Esophagus muscularis mucosa (tissue), 4 donors: ENCODE measurements at regions of chr7 and their contacts with region 1.

Region 1: GRCh38 chr7:116180302-116180701 is 30.0 kb upstream of the TES start:
- DNase-seq: no peak
- H3K4me3 ChIP-seq: no peak overlapping the region
- H3K27ac ChIP-seq: no peak overlapping the region
- H3K4me1 ChIP-seq: peaks cover 0 to 5% (median 1%) of the 10 kb centered on the region in 4 donors
- H3K27me3 ChIP-seq: no peaks in the 10 kb centered on the region
- CTCF ChIP-seq: peak; percentile 80 to 83 (median 81)
- EP300 ChIP-seq: no peak
- POLR2A ChIP-seq: no peak

Region 2: DNA sequence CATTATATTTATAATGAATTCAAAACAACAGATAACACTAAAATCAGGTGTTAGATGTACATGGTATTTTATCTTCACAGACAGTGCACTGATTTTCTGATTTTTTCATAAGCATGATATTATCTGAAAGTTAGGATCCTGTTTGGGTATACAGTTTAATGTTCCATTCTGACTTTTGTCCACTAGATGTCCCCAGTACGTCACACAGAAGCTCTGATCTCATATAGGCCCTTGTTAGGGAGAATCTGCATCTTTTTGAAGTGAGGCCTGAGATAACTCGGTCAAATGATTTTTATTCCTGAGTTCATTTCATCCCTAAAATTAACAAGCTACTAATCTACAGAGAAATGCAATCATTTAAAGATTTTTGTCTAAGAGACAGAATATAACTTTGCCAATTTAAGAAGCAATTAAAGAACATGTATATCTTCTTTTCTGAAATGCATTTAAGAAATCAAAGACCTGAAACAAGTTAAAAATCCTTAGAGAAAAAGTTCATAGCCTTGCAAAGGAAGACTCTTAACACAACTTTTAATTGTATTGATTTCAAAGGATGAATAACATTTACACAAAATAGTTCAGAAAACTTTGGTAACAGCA is 42.0 kb before region 1 on chr7:
- intact Hi-C with region 1: loop called (anchors 5 kb)
- DNase-seq: no peak
- H3K4me3 ChIP-seq: no peak overlapping the region
- H3K27ac ChIP-seq: peak overlapping the region in 1 of 4 donors; percentile 44
- H3K4me1 ChIP-seq: peaks cover 0 to 16% (median 13%) of the 10 kb centered on the region in 4 donors
- H3K27me3 ChIP-seq: no peaks in the 10 kb centered on the region
- CTCF ChIP-seq: peak; percentile 66 to 83 (median 67)
- EP300 ChIP-seq: no peak
- POLR2A ChIP-seq: no peak

Region 3: DNA sequence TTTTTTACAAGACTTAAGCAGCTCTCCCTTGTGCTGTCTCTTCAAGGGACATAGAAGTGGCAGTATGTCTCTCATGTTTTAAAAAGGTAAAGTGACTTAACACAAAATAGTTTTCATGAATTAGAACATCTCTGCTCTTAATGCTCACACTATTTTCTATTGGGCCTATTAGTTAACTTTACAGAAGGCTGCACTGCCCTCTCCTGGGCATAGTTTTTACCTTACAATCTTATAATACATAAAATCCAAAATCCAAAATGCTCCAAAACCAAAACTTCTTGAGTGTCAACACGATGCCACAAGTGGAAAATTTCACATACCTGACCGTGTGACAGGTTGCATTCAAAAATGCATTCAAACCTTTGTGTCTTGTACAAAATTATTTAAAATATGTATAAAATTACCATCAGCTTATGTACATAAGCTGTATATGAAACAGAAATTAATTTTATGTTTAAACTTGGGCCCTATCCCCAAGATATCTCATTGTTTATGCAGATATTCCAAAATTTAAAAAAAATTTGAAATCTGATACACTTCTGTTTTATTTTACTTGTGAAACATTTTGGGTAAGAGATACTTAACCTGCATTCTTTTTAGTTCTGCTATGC is 55.8 kb after region 1 on chr7:
- intact Hi-C with region 1: loop called (anchors 1 kb)
- DNase-seq: no peak
- H3K4me3 ChIP-seq: no peak overlapping the region
- H3K27ac ChIP-seq: peak overlapping the region in 1 of 4 donors; percentile 11
- H3K4me1 ChIP-seq: peaks cover 20 to 95% (median 84%) of the 10 kb centered on the region in 4 donors
- H3K27me3 ChIP-seq: no peaks in the 10 kb centered on the region
- CTCF ChIP-seq: peak; percentile 57 to 63 (median 57)
- EP300 ChIP-seq: no peak
- POLR2A ChIP-seq: no peak

Region 4: GRCh38 chr7:116576350-116577319 is 396.3 kb after region 1 on chr7:
- intact Hi-C with region 1: no loop called
- DNase-seq: no peak
- H3K4me3 ChIP-seq: no peak overlapping the region
- H3K27ac ChIP-seq: peak overlapping the region; percentile 29 to 49 (median 32)
- H3K4me1 ChIP-seq: peaks cover 19 to 29% (median 26%) of the 10 kb centered on the region in 4 donors
- H3K27me3 ChIP-seq: no peaks in the 10 kb centered on the region
- CTCF ChIP-seq: no peak
- EP300 ChIP-seq: no peak
- POLR2A ChIP-seq: no peak